ENCODE measurements at regions of chr1 and their contacts with region 1.

Region 1: DNA sequence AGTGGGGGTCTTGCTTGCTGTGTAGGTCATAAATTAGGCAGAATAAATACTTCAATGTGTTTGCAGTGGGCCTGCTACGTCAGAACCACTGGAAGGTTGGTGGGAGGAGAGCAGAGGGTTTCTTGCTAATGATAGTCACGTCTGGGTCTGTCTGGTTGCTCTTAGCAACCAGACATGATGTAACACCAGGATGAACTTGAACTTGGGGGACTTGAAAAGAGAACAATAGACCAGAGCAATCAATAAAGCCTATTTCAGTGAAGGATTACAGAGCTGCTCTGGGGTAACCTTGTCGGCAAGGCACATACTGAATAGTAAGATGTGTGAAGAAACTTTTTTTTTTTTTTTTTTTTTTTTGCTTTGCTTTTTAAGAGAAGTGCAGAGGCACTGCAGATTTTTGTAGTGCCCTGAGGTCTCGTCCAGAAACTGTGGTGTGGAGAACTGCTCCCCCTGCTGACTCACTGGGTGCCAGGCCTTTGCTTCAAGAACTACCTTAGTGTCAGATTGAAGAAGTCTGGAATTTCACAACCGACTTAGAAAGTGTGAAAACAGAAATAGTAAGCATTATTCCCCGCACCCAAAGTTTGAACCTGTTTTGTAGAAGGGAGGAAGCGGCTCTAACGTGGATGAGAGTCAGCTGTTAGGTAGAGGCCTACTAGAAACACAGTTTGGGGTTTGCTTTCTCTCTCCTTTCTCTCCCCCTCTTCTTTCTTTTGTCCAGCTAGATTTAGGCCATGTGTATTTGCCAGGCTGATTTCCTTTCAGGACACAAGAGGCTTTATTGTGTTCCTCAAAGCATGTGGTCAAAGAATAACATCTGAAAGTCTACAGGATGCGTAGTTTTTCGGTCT is 271.6 kb downstream of the TM2D1 start:
- DNase-seq: peak; percentile 97
- H3K4me3 ChIP-seq: no peak overlapping the region
- H3K27ac ChIP-seq: peak overlapping the region; percentile 89
- H3K4me1 ChIP-seq: peaks cover 39% of the 10 kb centered on the region
- H3K27me3 ChIP-seq: no peaks in the 10 kb centered on the region
- CTCF ChIP-seq: peak; percentile 75 to 79
- POLR2A ChIP-seq: peak; percentile 35

Region 2: GRCh38 chr1:60960891-60961461 is 492.4 kb before region 1 on chr1:
- CTCF ChIA-PET with region 1: no interaction called
- POLR2A ChIA-PET with region 1: no interaction called
- dilution Hi-C with region 1: no loop called
- intact Hi-C with region 1: loop called (anchors 1 kb)
- DNase-seq: peak; percentile 96
- H3K4me3 ChIP-seq: no peak overlapping the region
- H3K27ac ChIP-seq: peak overlapping the region; percentile 98
- H3K4me1 ChIP-seq: peaks cover 68% of the 10 kb centered on the region
- H3K27me3 ChIP-seq: no peaks in the 10 kb centered on the region
- CTCF ChIP-seq: no peak
- POLR2A ChIP-seq: no peak

Region 3: GRCh38 chr1:61077676-61078541 is 375.4 kb before region 1 on chr1:
- CTCF ChIA-PET with region 1: interaction called, 7 read pairs
- POLR2A ChIA-PET with region 1: no interaction called
- dilution Hi-C with region 1: no loop called
- intact Hi-C with region 1: loop called (anchors 1 kb)
- DNase-seq: peak; percentile 100
- H3K4me3 ChIP-seq: peak overlapping the region; percentile 44 to 97 (median 77)
- H3K27ac ChIP-seq: peak overlapping the region; percentile 45
- H3K4me1 ChIP-seq: peaks cover 41% of the 10 kb centered on the region
- H3K27me3 ChIP-seq: no peaks in the 10 kb centered on the region
- CTCF ChIP-seq: no peak
- POLR2A ChIP-seq: peak; percentile 10

Region 4: DNA sequence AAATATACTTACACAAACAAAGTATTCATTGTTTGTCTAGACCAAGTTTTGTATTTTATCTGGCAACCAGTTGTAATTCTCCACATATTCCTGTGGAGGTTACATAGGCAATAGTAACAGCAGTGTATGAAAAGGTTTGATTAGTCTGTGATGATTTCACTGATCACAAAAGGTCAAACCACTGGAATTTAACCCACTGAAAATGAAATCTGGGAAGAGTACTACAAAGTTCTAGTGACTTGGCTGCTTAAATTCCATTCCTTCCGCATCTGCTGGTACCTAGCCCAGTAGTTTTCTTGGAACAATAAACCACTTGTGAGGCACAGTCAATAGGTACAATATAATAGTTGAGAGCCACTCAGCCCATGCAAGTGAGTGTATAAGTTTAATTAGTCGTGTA is 165.6 kb before region 1 on chr1:
- CTCF ChIA-PET with region 1: no interaction called
- POLR2A ChIA-PET with region 1: no interaction called
- dilution Hi-C with region 1: no loop called
- intact Hi-C with region 1: loop called (anchors 1 kb)
- DNase-seq: peak; percentile 90
- H3K4me3 ChIP-seq: no peak overlapping the region
- H3K27ac ChIP-seq: peak overlapping the region; percentile 87
- H3K4me1 ChIP-seq: peaks cover 29% of the 10 kb centered on the region
- H3K27me3 ChIP-seq: no peaks in the 10 kb centered on the region
- CTCF ChIP-seq: no peak
- POLR2A ChIP-seq: no peak

Region 5: GRCh38 chr1:61403679-61404596 is 49.4 kb before region 1 on chr1:
- CTCF ChIA-PET with region 1: interaction called, 3 read pairs
- POLR2A ChIA-PET with region 1: no interaction called
- dilution Hi-C with region 1: no loop called
- intact Hi-C with region 1: loop called (anchors 1 kb)
- DNase-seq: peak; percentile 93
- H3K4me3 ChIP-seq: peak overlapping the region in 1 of 3 experiments; percentile 0
- H3K27ac ChIP-seq: peak overlapping the region; percentile 91
- H3K4me1 ChIP-seq: peaks cover 23% of the 10 kb centered on the region
- H3K27me3 ChIP-seq: no peaks in the 10 kb centered on the region
- CTCF ChIP-seq: no peak
- POLR2A ChIP-seq: no peak

Region 6: GRCh38 chr1:61426254-61426653 is 27.1 kb before region 1 on chr1:
- CTCF ChIA-PET with region 1: no interaction called
- POLR2A ChIA-PET with region 1: no interaction called
- dilution Hi-C with region 1: no loop called
- intact Hi-C with region 1: no loop called
- DNase-seq: no peak
- H3K4me3 ChIP-seq: no peak overlapping the region
- H3K27ac ChIP-seq: no peak overlapping the region
- H3K4me1 ChIP-seq: peaks cover 15% of the 10 kb centered on the region
- H3K27me3 ChIP-seq: no peaks in the 10 kb centered on the region
- CTCF ChIP-seq: no peak
- POLR2A ChIP-seq: no peak

Region 7: DNA sequence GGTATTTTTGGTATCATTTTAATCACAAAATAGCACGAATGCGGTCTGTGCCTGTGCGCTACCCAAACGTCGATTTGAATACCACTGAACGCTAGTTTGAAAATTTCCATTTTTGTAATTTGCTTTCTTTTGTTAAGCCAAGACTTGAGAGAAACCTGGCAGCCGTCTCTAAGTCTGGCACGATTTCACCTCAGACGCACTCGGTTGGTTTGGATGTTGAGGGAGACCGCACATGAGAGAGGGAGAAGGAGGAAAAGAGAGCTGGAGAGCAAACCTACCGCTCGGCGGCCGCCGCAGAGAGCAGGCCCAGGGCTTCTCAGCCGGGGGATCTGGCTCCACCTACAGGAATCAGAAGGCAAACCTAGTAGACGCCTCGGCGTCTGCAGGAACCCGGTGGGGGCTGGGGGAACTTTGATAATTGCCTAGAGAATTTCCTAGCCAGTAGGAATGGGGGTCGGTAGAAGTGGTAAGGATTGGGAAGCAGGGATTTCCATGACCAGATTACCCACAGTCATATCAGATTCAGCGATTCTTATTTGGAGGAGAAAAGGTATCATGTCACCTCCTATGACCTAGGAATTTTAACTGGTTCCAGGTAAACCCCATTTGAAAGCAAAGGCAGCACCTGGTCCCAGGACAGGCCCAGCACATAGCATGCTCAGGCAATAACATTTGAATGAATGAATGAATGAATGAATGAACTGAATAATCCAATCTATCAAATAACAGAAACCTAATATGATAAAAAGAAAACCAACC is 188.4 kb after region 1 on chr1:
- CTCF ChIA-PET with region 1: no interaction called
- POLR2A ChIA-PET with region 1: no interaction called
- dilution Hi-C with region 1: no loop called
- intact Hi-C with region 1: loop called (anchors 1 kb)
- DNase-seq: peak; percentile 75
- H3K4me3 ChIP-seq: peak overlapping the region in 1 of 3 experiments; percentile 37
- H3K27ac ChIP-seq: no peak overlapping the region
- H3K4me1 ChIP-seq: peaks cover 7% of the 10 kb centered on the region
- H3K27me3 ChIP-seq: no peaks in the 10 kb centered on the region
- CTCF ChIP-seq: peak; percentile 60 to 90
- POLR2A ChIP-seq: no peak